ENCODE measurements at regions of chr3 and their contacts with region 1.

Region 1: GRCh38 chr3:161619351-161619750 is 122.7 kb downstream of the OTOL1 start:
- DNase-seq: no peak
- H3K27ac ChIP-seq: no peak overlapping the region
- CTCF ChIP-seq: no peak

Region 2: GRCh38 chr3:161598639-161599038 is 20.7 kb before region 1 on chr3:
- CTCF ChIA-PET with region 1: interaction called, 13 read pairs
- POLR2A ChIA-PET with region 1: no interaction called
- DNase-seq: no peak
- H3K27ac ChIP-seq: no peak overlapping the region
- CTCF ChIP-seq: no peak